Posterior vena cava (tissue), 2 donors: ENCODE measurements at regions of chr11 and their contacts with region 1.

Region 1: DNA sequence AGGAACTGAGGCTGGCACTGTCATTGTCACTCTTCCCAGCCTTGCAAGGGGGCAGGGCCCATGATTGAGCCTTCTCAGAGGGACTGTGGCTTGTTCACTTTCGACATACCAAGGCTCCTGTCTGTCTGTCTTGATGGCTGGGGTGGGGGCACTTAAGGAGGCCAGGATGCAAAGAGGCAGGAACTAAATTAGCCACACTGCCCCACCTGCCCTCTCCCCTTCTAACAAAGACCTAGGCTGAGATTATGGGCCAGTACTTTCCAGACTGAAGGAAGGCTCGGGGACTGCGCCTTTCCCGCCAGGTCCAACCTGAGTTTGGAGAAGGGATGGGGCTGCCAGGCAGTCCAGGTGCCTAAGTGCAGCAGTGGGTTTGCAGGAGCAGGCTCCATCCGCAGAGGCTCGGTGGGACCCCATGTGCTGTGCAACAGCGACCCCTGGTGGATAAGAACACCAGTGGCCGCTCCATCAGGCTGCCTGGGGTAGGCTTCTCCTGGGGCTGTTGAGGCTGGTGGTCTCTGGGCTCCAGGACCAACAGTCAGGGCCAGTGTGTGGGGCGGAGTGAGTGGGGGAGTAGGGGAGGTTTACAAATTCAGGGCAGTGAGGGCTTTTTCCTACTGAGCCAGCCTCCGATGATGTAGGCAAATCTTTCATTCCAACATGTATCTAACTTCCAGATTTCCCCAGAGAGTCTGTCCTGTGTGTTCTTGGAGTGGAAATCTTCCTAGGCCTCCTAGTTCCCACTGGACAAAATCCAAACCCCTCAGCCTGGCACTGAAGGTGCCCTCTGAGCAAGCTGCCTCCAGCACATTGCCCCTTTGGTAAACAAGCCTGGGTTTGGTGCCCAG is 93.9 kb downstream of the INSC start:
- DNase-seq: peak; percentile 92

Region 2: DNA sequence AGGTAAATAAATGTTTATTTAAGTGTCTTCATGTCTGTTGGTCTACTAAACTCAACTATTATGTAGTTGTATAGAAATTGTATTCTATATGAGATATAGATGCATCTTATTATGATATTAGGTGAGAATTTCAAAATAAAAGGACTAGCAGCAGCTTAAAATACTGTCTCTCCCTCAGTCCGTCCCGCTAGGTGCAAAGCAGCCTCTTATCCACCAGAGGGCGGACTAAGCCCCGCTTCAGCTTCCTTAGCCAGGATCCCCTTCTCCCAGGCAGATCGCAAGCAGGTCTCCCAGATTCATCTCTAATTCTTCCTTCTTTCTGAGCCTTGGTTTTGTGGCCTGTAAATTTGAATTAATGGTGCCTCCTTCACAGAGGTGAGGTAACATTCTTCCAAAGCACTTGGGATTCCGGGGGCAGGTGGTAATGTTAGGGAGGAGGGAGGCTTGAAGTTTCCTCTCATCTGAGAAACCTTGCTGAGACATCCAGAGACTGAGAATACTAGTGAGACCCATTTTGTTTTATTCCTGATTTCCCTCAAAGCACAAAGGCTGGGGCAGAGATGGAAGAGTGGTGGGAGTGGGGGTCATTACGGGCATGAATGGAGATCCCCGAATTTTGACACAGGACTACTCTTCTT is 107.4 kb before region 1 on chr11:
- intact Hi-C with region 1: loop called (anchors 2 to 5 kb)
- DNase-seq: peak; percentile 87

Region 3: DNA sequence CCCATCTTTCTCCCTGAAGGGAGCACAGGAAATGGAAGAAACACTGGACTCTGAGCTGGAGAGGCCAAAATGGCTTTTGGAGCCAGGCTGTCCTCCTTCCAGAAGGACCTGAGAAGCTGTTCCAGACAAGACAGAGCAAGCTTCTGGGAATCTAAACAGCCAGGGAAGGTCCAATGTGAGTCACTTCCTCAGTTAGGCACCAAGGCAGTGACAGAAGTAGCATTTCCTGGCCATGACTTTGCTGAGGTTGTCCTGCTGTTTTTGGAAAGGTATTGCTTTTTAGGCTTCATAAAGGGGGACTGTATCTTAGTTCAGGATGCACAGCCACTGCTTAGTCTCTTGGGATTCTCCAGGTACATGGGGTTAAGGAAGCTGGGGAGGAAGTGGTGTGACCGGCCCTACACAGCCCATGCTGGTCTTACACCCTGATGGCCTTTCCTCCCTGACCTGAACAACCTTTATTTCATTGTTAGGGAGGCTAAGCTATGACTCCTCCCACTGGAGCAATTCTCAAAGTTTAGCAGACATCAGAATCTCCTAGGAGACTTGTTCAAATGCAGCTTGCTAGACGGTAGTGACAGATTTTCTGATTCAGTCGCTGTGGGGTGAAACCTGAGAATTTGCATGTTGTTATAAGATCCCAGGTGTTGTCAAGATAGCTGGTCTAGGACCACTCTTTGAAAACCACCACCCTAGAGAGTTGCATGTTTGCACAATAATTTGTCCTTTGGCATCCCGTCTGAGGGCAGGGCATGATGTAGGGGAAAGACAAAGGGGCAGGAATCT is 100.7 kb before region 1 on chr11:
- intact Hi-C with region 1: loop called (anchors 2 to 5 kb)
- DNase-seq: no peak

Region 4: GRCh38 chr11:15224466-15224865 is 15.9 kb after region 1 on chr11:
- intact Hi-C with region 1: loop called in 1 of 2 experiments (anchors 1 kb)
- DNase-seq: no peak